ENCODE measurements at regions of chr5 and their contacts with region 1.

Region 1: GRCh38 chr5:96687812-96688453 is 25.8 kb downstream of the CAST start:
- DNase-seq: no peak
- H3K4me3 ChIP-seq: no peak overlapping the region
- H3K27ac ChIP-seq: no peak overlapping the region
- H3K4me1 ChIP-seq: peaks cover 28% of the 10 kb centered on the region
- H3K27me3 ChIP-seq: no peaks in the 10 kb centered on the region
- CTCF ChIP-seq: peak; percentile 71 to 73

Region 2: GRCh38 chr5:96344678-96345577 is 343.0 kb before region 1 on chr5:
- CTCF ChIA-PET with region 1: no interaction called
- dilution Hi-C with region 1: no loop called
- in situ Hi-C with region 1: no loop called
- intact Hi-C with region 1: loop called (anchors 10 kb)
- DNase-seq: peak; percentile 49
- H3K4me3 ChIP-seq: no peak overlapping the region
- H3K27ac ChIP-seq: no peak overlapping the region
- H3K4me1 ChIP-seq: no peaks in the 10 kb centered on the region
- H3K27me3 ChIP-seq: no peaks in the 10 kb centered on the region
- CTCF ChIP-seq: peak; percentile 51 to 63

Region 3: GRCh38 chr5:96582343-96582742 is 105.6 kb before region 1 on chr5:
- CTCF ChIA-PET with region 1: no interaction called
- dilution Hi-C with region 1: no loop called
- in situ Hi-C with region 1: no loop called
- intact Hi-C with region 1: no loop called
- DNase-seq: no peak
- H3K4me3 ChIP-seq: no peak overlapping the region
- H3K27ac ChIP-seq: no peak overlapping the region
- H3K4me1 ChIP-seq: no peaks in the 10 kb centered on the region
- H3K27me3 ChIP-seq: no peaks in the 10 kb centered on the region
- CTCF ChIP-seq: no peak

Region 4: DNA sequence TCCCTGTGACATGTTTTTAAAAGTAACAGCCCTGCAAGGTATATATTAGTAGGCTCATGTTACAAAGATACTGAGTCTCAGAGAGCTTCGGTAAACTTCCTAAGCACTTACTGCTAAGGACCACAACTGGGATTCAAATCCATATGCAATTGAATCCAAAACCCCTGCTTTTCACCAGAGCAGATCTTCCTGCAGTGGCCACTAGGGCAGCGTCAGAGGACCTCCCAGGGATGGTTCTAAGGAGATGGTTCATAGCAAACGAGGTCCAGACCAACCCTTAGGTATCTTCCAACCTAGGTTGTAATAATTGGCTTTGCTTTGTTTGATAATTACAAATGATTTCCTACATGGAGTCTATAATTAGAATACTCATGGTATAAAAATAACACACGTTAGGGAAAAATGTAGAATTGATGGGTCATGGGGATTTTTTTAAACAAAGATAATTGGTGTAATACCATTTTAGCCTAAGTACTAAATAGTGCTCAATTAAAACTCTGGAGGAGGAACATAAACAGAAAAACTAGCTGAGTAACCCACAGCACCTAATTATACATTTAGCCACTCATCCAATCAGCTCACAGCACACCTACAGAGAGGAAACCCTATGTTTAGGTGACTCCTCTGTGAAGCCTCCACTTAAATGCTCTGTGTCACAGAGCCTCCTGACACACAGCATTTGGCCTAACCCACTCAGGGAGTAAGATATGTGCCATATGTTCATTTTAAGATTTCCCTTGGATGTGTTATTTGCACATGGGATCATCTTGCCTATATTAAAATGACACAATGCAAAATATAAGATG is 35.8 kb before region 1 on chr5:
- CTCF ChIA-PET with region 1: no interaction called
- dilution Hi-C with region 1: no loop called
- in situ Hi-C with region 1: no loop called
- intact Hi-C with region 1: no loop called
- DNase-seq: no peak
- H3K4me3 ChIP-seq: no peak overlapping the region
- H3K27ac ChIP-seq: no peak overlapping the region
- H3K4me1 ChIP-seq: peaks cover 55% of the 10 kb centered on the region
- H3K27me3 ChIP-seq: no peaks in the 10 kb centered on the region
- CTCF ChIP-seq: peak; percentile 31 to 48

Region 5: DNA sequence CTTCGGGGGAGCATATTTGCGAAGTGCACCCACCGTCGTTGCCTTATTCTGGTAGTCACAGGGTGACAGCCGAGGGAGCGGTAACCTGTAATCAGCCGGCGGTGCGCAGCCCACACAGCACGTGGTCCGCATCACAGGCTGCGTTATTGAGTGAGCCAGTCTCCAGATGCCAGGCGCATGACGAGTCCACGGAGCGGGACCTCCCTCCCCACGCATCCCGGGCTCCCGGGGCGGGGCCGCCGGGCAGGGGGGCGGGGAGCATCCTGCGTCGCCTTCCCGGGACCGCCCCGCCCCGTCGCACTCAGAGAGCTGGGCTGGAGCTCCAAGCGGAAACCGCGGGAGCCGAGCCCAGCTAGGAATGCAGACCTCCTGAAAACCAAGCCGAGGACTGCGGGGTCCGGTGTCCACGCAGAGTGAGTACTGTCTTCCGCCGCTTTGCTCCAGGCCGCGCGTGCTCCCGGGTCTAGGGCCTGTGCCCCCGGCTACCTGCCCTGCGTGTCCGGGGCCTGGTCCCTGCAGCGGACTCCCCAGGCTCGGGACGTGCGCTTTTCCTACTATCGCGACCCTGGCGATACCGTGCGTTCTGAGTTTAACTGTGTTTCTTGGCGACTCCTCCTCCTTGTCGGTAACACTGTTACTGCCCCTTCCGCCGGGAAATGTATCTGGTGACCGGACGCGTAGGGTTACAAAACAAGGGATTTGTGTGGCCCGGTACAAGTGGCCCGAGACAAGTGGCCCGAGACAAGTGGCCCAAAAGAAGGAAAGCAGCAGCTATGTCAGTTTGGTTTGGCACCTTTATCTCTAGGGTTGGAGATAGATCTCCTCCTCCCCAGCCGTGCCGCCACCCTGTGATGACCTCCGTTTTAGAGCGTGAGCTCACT is 14.8 kb after region 1 on chr5:
- CTCF ChIA-PET with region 1: interaction called, 5 read pairs
- dilution Hi-C with region 1: no loop called
- in situ Hi-C with region 1: no loop called
- intact Hi-C with region 1: loop called (anchors 1 kb)
- DNase-seq: peak; percentile 97
- H3K4me3 ChIP-seq: peak overlapping the region; percentile 63 to 79 (median 68)
- H3K27ac ChIP-seq: peak overlapping the region; percentile 99
- H3K4me1 ChIP-seq: peaks cover 54% of the 10 kb centered on the region
- H3K27me3 ChIP-seq: no peaks in the 10 kb centered on the region
- CTCF ChIP-seq: no peak

Region 6: DNA sequence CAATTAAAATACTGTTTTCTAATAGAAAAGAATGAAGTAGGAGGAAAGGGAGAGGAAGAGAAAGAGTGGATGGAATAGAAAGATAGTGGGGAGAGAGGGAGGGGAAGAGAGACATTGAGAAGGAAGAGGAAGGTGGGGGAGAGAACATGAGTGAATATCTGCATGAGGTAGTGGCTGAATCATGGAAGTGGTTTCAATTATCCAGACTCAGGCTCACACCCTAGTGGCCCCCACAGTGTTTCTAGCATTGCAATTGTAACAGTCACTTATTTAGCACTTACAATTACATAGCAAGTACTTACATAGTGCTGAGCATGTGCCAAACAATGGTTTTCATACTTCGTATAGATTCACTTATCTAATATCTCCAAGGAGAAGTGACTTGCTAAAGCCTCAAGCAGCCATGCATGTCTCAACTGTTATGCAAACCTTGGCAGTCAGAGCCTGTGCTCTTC is 47.0 kb after region 1 on chr5:
- CTCF ChIA-PET with region 1: no interaction called
- dilution Hi-C with region 1: no loop called
- in situ Hi-C with region 1: no loop called
- intact Hi-C with region 1: loop called (anchors 2 kb)
- DNase-seq: peak; percentile 71
- H3K4me3 ChIP-seq: no peak overlapping the region
- H3K27ac ChIP-seq: peak overlapping the region; percentile 70
- H3K4me1 ChIP-seq: peaks cover 39% of the 10 kb centered on the region
- H3K27me3 ChIP-seq: no peaks in the 10 kb centered on the region
- CTCF ChIP-seq: peak in 1 of 2 donors; percentile 9

Region 7: DNA sequence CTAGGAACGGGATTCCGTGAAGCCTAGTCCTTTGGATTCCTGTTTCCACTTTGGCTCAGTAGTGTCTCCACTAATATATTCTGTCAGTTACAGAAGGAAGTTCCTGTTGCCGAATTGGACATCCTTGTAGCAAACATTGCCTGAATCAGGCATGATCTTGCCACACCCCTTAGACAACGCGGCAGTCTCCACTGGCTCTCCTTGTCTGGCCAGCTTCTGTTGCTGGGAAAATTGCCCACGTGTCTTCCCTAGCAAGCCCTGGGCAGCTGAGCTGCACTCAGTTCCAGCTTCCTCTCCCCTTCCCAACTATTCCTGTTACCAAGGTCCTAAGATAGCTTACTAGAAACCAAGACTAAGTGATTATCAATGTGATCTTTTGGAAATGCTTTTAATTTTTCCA is 811.7 kb after region 1 on chr5:
- CTCF ChIA-PET with region 1: no interaction called
- dilution Hi-C with region 1: no loop called
- in situ Hi-C with region 1: no loop called
- intact Hi-C with region 1: no loop called
- DNase-seq: no peak
- H3K4me3 ChIP-seq: no peak overlapping the region
- H3K27ac ChIP-seq: no peak overlapping the region
- H3K4me1 ChIP-seq: no peaks in the 10 kb centered on the region
- H3K27me3 ChIP-seq: no peaks in the 10 kb centered on the region
- CTCF ChIP-seq: no peak

Measured in mammary epithelial cell (primary cell).